ENCODE measurements at regions of chr22 and their contacts with region 1.

Region 1: DNA sequence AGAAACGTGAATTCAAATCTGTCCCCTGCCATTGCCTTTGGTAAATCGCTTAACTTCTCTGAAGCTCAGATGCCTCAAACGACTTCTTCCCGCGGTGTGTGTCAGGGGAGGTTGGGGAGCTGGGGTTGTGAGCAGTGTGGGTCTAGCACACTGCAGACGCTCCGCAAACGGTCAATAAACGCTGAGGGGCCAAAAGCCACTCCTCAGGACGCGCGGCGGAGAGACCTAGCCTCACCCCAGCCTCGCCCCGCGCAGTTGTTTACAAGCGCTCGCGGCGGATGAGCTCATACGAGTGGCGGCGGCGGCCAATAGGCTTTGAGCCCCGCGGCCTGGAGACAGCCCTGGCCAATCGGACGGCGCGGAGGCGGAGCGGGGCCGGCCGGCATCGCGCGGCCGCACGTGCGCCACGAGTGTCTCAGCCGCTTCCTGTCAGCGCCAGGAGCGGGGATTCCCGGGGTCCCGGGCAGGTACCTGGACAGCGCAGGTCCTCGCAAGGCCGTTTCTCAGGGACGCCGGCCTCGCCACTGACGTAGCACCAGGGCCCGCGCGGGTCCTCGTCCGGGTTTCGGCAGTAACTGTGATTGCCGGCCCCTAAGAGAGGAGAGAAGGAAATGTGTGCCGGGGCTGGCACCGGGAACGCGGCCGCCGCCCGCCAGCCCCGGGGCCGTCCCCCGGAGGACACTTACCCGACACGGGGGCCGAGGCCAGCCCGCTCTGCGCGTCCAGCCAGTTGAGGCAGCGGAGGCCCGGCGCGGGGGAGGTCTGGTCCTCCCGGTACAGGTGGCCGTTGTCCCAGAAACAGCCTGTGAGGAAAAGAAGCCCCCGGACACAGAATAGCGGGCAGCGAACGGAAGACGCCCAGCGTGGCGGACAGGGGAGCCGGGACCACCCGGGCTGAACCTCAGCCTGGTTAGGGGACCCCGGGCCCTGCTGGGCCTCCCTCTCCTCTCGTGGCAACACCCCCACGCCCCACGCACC is 1.5 kb downstream of the PIK3IP1 start:
- DNase-seq: peak; percentile 98

Region 2: DNA sequence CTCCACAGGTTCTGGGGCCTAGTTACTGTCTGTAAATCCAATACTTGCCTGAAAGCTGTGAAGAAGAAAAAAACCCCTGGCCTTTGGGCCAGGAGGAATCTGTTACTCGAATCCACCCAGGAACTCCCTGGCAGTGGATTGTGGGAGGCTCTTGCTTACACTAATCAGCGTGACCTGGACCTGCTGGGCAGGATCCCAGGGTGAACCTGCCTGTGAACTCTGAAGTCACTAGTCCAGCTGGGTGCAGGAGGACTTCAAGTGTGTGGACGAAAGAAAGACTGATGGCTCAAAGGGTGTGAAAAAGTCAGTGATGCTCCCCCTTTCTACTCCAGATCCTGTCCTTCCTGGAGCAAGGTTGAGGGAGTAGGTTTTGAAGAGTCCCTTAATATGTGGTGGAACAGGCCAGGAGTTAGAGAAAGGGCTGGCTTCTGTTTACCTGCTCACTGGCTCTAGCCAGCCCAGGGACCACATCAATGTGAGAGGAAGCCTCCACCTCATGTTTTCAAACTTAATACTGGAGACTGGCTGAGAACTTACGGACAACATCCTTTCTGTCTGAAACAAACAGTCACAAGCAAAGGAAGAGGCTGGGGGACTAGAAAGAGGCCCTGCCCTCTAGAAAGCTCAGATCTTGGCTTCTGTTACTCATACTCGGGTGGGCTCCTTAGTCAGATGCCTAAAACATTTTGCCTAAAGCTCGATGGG is 12.0 kb before region 1 on chr22:
- CTCF ChIA-PET with region 1: interaction called, 3 read pairs
- POLR2A ChIA-PET with region 1: interaction called, 13 read pairs
- DNase-seq: no peak

Region 3: DNA sequence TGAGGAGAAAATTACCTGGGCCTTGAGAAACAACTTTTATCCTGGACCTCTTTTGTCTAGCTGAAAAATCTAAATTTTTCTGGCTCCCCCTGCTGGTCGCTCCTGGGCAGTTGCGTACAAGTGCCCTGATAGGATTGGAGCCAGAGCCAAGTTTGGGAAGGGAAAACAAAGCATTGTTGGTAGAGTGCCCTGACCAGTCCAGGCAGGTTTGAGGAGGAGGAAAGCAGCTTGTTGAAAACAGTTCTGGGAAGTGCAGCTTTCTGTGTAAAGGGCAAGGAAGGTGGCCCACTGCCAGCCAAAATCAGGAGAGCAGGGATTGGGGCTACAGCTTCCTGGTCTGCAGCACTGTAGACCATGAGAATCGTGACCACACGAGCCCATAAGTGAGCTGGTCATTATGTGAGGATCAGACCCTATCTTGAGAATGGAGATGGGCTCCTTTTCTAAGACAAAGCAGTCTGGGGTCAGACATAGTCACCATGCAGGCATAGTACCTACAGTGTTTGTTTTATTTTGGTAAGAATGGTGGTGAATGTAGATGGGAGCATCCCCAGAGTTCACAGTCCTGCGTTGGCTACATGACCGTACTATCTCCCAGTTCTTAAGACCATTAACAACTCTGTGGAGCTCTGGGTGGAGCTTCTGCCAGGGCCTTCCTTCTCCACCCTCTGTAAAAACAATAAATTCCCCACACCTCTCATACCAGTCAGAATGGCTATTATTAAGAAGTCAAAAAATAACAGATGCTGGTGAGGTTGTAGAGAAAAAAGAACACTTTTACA is 22.8 kb after region 1 on chr22:
- CTCF ChIA-PET with region 1: interaction called, 10 read pairs
- POLR2A ChIA-PET with region 1: interaction called, 5 read pairs
- DNase-seq: peak; percentile 77

Region 4: GRCh38 chr22:31425331-31426050 is 134.7 kb after region 1 on chr22:
- CTCF ChIA-PET with region 1: no interaction called
- POLR2A ChIA-PET with region 1: no interaction called
- DNase-seq: no peak